Thyroid gland (tissue), 4 donors: ENCODE measurements at regions of chr15 and their contacts with region 1.

Region 1: DNA sequence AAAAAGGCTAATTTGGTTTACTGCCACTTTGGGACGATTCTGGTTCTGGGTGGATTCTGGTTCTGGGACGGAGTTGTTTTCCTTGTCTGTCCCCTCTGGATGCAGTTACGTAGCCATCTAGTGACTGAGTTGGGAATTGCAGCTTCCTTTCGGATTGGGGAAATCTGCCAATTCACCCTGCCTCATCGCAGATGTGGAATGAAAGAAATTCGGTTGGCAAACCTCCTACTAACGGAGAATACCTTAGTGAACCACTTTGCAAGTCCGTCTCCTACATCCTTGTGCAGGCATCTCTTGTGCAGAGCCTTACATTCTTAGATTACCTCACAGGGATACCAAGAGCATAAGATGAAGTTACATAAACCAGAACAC is 31.5 kb upstream of the AP4E1 start:
- DNase-seq: peak; percentile 83 to 85
- H3K4me3 ChIP-seq: peak overlapping the region in 1 of 3 donors; percentile 6
- H3K27ac ChIP-seq: no peak overlapping the region
- H3K4me1 ChIP-seq: peaks cover 0 to 4% of the 10 kb centered on the region in 2 donors
- H3K27me3 ChIP-seq: no peaks in the 10 kb centered on the region
- CTCF ChIP-seq: peak; percentile 95 to 99 (median 98)
- POLR2A ChIP-seq: no peak

Region 2: GRCh38 chr15:50675536-50676144 is 201.3 kb before region 1 on chr15:
- intact Hi-C with region 1: loop called (anchors 5 kb)
- DNase-seq: no peak
- H3K4me3 ChIP-seq: no peak overlapping the region
- H3K27ac ChIP-seq: no peak overlapping the region
- H3K4me1 ChIP-seq: no peaks in the 10 kb centered on the region
- H3K27me3 ChIP-seq: no peaks in the 10 kb centered on the region
- CTCF ChIP-seq: peak; percentile 43 to 83 (median 74)
- POLR2A ChIP-seq: no peak

Region 3: DNA sequence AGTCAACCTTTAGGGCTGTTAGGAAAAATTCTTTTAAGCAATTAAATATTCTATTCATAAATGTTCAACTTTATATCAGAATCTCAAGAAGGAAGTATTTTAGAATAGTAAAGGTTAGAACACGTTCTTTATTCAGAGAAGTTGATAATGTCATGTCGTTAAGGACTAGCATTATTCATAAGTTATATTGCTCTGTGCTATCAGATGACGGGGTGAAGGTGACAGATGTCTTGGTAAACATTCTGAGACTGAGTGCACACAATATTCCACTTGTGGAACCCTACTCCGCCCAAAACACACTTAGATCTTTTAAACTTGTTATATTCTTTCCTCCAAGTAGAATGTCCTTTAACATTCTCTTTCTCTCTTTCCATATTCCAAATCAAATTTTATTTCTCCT is 39.4 kb after region 1 on chr15:
- intact Hi-C with region 1: no loop called
- DNase-seq: no peak
- H3K4me3 ChIP-seq: no peak overlapping the region
- H3K27ac ChIP-seq: no peak overlapping the region
- H3K4me1 ChIP-seq: no peaks in the 10 kb centered on the region
- H3K27me3 ChIP-seq: no peaks in the 10 kb centered on the region
- CTCF ChIP-seq: no peak
- POLR2A ChIP-seq: no peak